ENCODE measurements at regions of chr17 and their contacts with region 1.

Region 1: DNA sequence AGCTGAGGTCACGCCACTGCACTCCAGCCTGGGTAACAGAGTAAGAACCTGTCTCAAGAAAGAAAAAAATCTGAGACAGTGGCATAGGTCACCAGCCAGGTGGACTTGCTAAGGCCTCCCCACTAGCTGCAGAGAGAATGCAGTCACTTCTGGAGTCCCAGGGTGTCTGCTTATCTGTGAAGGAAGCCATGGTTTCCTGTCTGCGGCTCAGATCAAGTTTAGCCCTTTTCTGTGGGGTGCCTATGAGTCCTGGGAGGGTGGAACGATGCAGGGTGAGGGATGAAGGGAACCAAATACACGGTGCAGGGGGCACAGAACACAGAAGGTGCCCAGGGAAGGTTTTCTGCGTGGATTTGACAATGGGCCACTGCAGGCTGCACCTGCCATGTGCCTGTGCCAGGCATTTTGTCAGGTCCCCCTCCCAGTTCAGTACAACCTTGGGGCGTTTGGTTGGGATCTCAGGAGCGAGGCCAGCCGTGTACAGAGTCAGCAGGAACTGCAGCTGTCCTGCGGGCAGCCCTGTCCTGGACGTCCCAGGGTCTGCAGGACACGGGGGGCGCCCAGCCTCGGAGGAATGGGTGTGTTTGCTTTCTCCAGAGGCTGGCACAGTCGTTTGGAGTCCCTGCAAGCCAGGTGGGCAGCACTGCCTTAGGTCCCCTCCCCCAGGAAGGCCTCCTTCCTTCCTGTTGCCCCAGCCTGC is 41.8 kb downstream of the RAB11FIP4 start:
- DNase-seq: peak; percentile 45
- H3K4me3 Mint-ChIP-seq: no peak overlapping the region
- H3K27ac Mint-ChIP-seq: no peak overlapping the region
- H3K4me1 Mint-ChIP-seq: peaks cover 13% of the 10 kb centered on the region
- H3K27me3 Mint-ChIP-seq: no peaks in the 10 kb centered on the region

Region 2: GRCh38 chr17:31487648-31488263 is 54.5 kb after region 1 on chr17:
- CTCF ChIA-PET with region 1: interaction called, 6 read pairs
- intact Hi-C with region 1: loop called (anchors 2 kb)
- DNase-seq: peak; percentile 91
- H3K4me3 Mint-ChIP-seq: peak overlapping the region; percentile 81
- H3K27ac Mint-ChIP-seq: peak overlapping the region; percentile 34
- H3K4me1 Mint-ChIP-seq: peaks cover 45% of the 10 kb centered on the region
- H3K27me3 Mint-ChIP-seq: no peaks in the 10 kb centered on the region

Region 3: GRCh38 chr17:31517524-31517923 is 84.3 kb after region 1 on chr17:
- CTCF ChIA-PET with region 1: interaction called, 117 read pairs
- intact Hi-C with region 1: loop called (anchors 2 kb)
- DNase-seq: no peak
- H3K4me3 Mint-ChIP-seq: no peak overlapping the region
- H3K27ac Mint-ChIP-seq: no peak overlapping the region
- H3K4me1 Mint-ChIP-seq: peaks cover 21% of the 10 kb centered on the region
- H3K27me3 Mint-ChIP-seq: no peaks in the 10 kb centered on the region

Region 4: DNA sequence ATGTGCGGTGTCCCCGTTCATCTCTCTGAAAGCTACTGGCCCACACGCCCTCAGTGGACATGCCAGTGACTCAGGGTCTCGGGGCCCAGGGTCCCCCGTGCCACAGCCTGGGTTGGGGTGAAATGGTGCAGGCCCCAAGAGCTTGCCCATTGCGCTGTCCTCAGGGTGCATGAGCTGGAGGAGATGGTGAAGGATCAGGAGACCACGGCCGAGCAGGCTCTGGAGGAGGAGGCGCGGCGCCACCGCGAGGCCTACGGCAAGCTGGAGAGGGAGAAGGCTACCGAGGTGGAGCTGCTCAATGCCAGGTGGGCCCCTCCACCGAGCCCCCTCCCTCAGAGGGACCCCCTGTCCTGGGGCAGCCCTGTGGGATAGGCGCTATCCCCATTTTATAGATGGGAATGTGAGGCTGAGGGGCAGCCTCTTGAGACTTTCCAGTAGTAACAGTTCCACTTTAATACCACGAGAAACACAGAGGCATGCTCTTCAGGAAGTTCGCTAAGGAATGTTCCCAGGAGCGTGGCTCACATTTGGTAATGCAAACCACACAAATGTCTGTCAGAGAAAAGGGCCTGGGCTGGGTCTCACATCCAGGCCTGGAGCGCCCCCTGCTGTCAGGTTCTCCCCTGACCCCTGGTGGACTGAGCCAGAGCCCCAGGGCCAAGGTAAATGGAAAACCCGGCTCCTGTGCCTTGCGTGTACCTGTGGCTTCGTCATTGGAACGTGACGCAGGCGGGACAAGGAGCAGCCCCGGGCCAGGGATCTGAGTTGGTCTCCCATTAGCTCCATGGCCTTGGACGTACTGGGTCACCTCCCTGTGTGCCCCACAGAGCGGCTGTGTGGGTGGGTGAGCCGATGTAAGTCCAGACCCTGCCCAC is 91.9 kb after region 1 on chr17:
- CTCF ChIA-PET with region 1: interaction called, 117 read pairs
- intact Hi-C with region 1: loop called (anchors 1 kb)
- DNase-seq: peak; percentile 91
- H3K4me3 Mint-ChIP-seq: no peak overlapping the region
- H3K27ac Mint-ChIP-seq: no peak overlapping the region
- H3K4me1 Mint-ChIP-seq: no peaks in the 10 kb centered on the region
- H3K27me3 Mint-ChIP-seq: no peaks in the 10 kb centered on the region

Measured in activated naive CD4-positive, alpha-beta T cell treated with anti-CD3 and anti-CD28 coated beads for 36 hours (primary cell).